Motor neuron (in vitro differentiated cells): ENCODE measurements at regions of chr6 and their contacts with region 1.

Region 1: DNA sequence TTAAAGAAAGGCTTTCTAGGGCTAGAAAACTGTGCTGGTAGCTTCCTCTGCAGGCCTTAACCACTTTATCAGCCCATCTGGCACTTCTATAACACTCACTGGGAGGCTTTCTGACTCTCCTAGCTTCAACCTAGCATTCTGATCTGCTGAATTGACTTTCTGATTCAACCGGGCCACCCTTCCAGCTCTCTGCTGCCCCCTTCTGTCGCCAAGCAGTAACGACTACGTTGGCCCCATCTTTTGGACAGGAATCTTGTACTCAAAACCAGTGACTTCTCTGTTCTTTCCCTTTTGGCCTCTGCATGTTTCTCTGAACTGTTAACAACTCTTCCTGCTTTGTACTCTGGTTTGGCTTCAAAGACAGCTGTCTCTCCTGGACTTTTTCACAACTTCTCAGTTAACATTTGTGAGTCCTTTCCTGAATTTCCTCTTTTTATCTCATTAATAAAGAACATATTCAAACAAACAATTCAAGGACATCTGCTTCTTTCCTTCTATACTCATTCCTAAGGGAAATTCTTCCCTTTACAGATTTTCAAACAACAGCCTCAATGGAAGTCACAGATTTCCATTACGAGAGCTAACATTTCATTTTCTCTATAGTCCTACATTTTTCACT is 43.9 kb upstream of the FAM135A start:
- ATAC-seq: peak in 5 of 8 experiments; percentile 28 to 84 (median 84)
- H3K4me3 ChIP-seq: no peak overlapping the region
- H3K27ac ChIP-seq: no peak overlapping the region
- H3K4me1 ChIP-seq: no peaks in the 10 kb centered on the region

Region 2: DNA sequence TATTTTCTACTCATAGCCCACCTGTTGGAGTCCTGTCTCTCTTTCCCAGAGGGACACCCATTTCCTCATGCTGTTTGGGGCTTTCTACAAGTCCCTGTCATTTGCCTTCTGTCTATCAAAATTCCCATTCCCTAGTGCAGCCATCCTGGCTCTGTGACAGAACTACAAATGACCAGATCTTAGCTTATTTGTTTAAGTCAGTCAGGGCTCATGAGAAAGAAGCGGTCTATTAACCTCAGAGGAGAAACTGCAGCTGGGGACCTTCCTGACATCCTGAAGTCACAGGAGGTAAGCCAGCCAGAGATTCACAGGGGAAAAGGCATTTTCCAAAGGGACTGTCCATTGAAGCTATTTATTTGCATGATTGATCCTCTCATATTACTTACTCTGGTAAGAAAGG is 64.8 kb before region 1 on chr6:
- in situ Hi-C with region 1: loop called in 1 of 9 experiments (anchors 10 kb)
- ATAC-seq: no peak
- H3K4me3 ChIP-seq: no peak overlapping the region
- H3K27ac ChIP-seq: no peak overlapping the region
- H3K4me1 ChIP-seq: peaks cover 3 to 10% of the 10 kb centered on the region in 2 donors

Region 3: GRCh38 chr6:71982389-71982788 is 1612.9 kb after region 1 on chr6:
- in situ Hi-C with region 1: no loop called
- ATAC-seq: peak in 5 of 8 experiments; percentile 18 to 88 (median 51)
- H3K4me3 ChIP-seq: no peak overlapping the region
- H3K27ac ChIP-seq: no peak overlapping the region
- H3K4me1 ChIP-seq: peaks cover 0 to 8% of the 10 kb centered on the region in 2 donors